HEK293T (cell line): ENCODE measurements at regions of chr1 and their contacts with region 1.

Region 1: DNA sequence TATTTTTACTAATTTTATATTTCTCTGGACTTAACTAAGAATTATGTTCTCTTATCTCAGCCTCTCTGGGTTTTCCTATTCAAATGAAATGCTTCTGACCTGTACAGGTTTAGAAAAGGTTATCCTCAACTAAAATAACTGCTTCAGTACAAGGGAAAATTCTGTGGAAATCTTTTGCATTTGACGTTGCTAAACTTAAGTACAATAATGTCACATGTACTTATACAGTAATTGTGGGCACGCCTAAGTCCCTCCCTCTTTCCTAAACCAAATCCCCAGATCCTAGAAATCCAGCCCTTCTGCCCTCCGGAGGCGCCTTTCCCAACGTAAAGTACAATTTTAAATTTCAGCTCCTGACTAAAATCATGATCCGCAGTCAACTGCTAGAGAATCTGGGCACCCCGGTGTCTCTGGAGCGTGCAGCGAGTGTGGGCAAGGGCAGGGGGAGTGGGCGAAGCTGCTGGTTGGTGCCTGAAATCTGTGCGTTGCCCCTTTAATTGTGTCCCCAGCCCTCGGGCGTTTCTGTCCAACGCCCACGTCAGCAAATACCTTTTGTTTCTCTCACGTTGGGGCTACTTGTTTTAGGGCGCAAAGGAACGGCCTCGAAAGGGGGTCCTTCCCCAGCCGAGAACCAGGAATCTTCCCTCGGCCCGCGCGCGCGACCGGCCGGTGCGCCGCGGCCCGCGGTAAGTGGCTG is at the start of gene ZBTB8A:
- DNase-seq: peak; percentile 68

Region 2: DNA sequence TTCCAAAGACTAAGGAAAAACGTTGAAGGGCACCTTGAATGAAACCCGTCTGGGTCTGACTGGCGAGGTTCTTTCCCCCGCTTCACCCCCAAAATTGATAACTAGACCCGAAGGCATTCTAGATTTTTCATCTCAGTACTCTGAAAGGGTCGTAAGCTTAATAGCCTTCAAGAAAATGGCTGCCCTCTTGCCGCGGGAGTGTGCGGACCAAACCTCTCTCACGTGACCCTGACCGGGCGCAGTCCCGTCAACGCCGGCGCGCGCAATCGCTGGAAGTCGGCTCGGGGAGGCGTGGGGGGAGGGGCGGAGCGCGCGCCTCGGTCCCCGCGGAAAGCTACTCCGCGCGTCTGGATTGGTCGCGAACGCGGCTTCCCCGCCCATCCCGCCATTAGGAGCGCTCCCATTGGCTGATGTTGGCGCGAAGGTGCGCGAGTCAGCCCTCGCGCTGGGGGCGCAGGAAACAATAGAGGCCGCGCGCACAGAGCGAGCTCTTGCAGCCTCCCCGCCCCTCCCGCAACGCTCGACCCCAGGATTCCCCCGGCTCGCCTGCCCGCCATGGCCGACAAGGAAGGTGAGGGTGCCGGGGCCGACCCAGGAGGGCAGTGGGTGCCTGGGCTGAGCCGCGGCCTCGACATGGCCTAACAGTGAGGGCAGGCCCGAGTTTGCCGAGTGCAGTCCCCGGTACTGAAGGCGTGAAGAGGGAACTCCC is 111.9 kb after region 1 on chr1 and contains the start of gene RBBP4:
- CTCF ChIA-PET with region 1: no interaction called
- POLR2A ChIA-PET with region 1: interaction called, 10 read pairs
- DNase-seq: peak; percentile 100